Aorta (tissue), 5 donors: ENCODE measurements at regions of chr21 and their contacts with region 1.

Region 1: GRCh38 chr21:29477941-29478340 is 179.2 kb downstream of the BACH1 start:
- DNase-seq: no peak
- ATAC-seq: no peak
- H3K4me3 ChIP-seq: no peak overlapping the region
- H3K27ac ChIP-seq: no peak overlapping the region
- H3K4me1 ChIP-seq: no peaks in the 10 kb centered on the region
- H3K27me3 ChIP-seq: no peaks in the 10 kb centered on the region

Region 2: DNA sequence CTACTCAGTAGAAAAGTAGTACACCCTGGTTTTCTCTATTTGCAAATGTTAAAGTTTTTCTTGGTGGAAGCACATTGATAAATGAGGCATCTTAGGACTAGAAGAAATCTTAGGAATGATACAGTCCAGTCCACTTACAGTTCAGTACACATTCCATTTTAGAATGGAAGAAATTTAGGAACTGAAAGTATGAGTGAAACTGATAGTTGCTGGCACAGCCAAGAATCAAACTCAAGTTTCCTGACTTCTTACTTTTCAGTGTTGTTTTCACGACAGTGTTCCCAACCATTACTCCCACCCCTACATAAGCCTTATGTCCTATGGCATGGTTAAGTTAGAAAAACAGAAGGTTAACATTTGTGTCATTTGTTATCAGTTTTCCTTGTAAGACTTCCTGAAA is 79.3 kb after region 1 on chr21:
- intact Hi-C with region 1: no loop called
- DNase-seq: no peak
- ATAC-seq: no peak
- H3K4me3 ChIP-seq: no peak overlapping the region
- H3K27ac ChIP-seq: no peak overlapping the region
- H3K4me1 ChIP-seq: no peaks in the 10 kb centered on the region
- H3K27me3 ChIP-seq: no peaks in the 10 kb centered on the region

Region 3: DNA sequence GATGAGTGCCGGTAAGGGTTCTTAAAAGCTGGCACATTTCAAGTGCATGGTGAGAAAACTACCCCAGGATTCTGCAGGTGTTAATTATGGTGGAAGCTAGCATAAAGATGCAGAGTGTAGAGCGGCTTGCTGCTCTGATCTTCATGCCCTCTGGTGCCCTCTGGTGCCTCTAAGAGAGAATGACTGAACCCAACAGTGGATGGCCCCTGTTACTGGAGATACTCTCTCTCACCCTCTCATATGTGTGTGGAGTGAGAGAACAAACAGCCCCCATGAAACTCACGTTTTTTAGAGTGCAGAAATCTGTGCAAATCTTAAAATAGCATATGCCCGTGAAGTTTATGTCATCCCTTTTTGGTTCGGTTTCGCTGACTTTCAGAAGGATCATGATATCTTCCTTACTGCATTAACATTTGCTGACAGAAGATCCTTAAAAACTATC is 371.8 kb after region 1 on chr21:
- intact Hi-C with region 1: loop called (anchors 2 to 10 kb)
- DNase-seq: peak in 1 of 2 donors; percentile 50
- ATAC-seq: peak; percentile 83
- H3K4me3 ChIP-seq: no peak overlapping the region
- H3K27ac ChIP-seq: no peak overlapping the region
- H3K4me1 ChIP-seq: no peaks in the 10 kb centered on the region
- H3K27me3 ChIP-seq: no peaks in the 10 kb centered on the region